ENCODE measurements at regions of chr9 and their contacts with region 1.

Region 1: DNA sequence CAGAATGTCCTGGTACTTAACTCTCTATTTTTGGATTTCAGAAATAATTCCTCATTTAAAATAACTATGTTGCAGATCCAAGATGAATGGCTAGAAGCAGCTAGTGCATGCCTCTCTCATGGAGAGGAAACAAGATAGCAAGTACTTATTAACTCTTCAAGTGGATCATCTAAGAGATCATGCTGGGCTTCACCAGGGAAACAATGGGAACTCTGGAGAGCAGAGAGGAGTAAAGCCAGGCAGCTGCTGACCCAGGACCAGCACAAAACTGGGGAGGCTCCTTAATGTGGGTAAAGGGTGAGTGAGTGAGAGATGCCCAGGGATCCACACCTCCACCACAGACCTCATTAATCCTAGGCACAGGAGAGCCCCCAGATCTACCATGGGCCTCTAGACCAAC is 897.8 kb upstream of the ACO1 start:
- DNase-seq: no peak
- ATAC-seq: no peak
- H3K4me3 ChIP-seq: no peak overlapping the region
- H3K4me3 Mint-ChIP-seq: no peak overlapping the region
- H3K27ac ChIP-seq: no peak overlapping the region
- H3K27ac Mint-ChIP-seq: no peak overlapping the region
- H3K4me1 ChIP-seq: no peaks in the 10 kb centered on the region
- H3K4me1 Mint-ChIP-seq: no peaks in the 10 kb centered on the region
- H3K27me3 ChIP-seq: no peaks in the 10 kb centered on the region
- H3K27me3 Mint-ChIP-seq: no peaks in the 10 kb centered on the region
- CTCF ChIP-seq: no peak

Region 2: GRCh38 chr9:30235564-30235963 is 1251.1 kb before region 1 on chr9:
- CTCF ChIA-PET with region 1: no interaction called
- POLR2A ChIA-PET with region 1: no interaction called
- intact Hi-C with region 1: no loop called
- DNase-seq: no peak
- ATAC-seq: no peak
- H3K4me3 ChIP-seq: no peak overlapping the region
- H3K4me3 Mint-ChIP-seq: no peak overlapping the region
- H3K27ac ChIP-seq: no peak overlapping the region
- H3K27ac Mint-ChIP-seq: no peak overlapping the region
- H3K4me1 ChIP-seq: no peaks in the 10 kb centered on the region
- H3K4me1 Mint-ChIP-seq: no peaks in the 10 kb centered on the region
- H3K27me3 ChIP-seq: no peaks in the 10 kb centered on the region
- H3K27me3 Mint-ChIP-seq: no peaks in the 10 kb centered on the region
- CTCF ChIP-seq: no peak

Region 3: GRCh38 chr9:31412081-31412480 is 74.5 kb before region 1 on chr9:
- CTCF ChIA-PET with region 1: no interaction called
- POLR2A ChIA-PET with region 1: no interaction called
- intact Hi-C with region 1: no loop called
- DNase-seq: no peak
- ATAC-seq: no peak
- H3K4me3 ChIP-seq: no peak overlapping the region
- H3K4me3 Mint-ChIP-seq: no peak overlapping the region
- H3K27ac ChIP-seq: no peak overlapping the region
- H3K27ac Mint-ChIP-seq: no peak overlapping the region
- H3K4me1 ChIP-seq: no peaks in the 10 kb centered on the region
- H3K4me1 Mint-ChIP-seq: peaks cover 5% of the 10 kb centered on the region
- H3K27me3 ChIP-seq: no peaks in the 10 kb centered on the region
- H3K27me3 Mint-ChIP-seq: no peaks in the 10 kb centered on the region
- CTCF ChIP-seq: no peak

Region 4: DNA sequence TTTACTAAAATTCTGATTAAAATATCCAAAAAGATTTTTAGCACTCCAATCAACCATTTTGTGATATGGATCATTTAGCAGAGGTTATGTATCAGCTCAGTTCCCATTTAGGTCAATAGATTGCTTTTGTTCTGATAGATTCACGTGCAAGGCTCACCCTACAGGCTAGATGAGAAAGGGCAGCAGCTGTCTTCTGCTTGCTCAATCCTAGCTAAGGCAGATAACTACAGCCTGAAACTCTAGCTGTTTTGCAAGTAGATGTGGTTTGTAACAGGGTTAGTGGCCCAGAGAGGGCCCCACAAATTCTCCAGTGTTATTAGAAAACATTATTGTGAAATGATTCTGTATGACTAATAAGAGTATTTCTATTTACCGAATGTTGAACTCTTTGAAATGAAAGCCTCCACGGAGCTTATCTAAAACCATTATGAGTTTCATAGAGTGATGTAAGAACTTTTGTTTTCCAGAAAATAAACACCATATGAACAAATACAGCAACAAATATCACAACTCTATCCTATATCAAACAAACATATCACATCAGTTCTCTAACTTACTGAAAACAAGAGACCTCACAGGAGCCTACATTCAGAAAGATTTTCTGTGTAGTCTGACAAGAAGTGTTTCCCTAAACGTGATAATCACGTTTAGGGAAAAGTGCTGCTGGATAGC is 55.9 kb after region 1 on chr9:
- CTCF ChIA-PET with region 1: no interaction called
- POLR2A ChIA-PET with region 1: no interaction called
- intact Hi-C with region 1: loop called in 1 of 2 experiments (anchors 5 kb)
- DNase-seq: peak in 9 of 14 experiments; percentile 1 to 62 (median 9)
- ATAC-seq: peak; percentile 80
- H3K4me3 ChIP-seq: no peak overlapping the region
- H3K4me3 Mint-ChIP-seq: no peak overlapping the region
- H3K27ac ChIP-seq: no peak overlapping the region
- H3K27ac Mint-ChIP-seq: no peak overlapping the region
- H3K4me1 ChIP-seq: no peaks in the 10 kb centered on the region
- H3K4me1 Mint-ChIP-seq: peaks cover 20% of the 10 kb centered on the region
- H3K27me3 ChIP-seq: no peaks in the 10 kb centered on the region
- H3K27me3 Mint-ChIP-seq: no peaks in the 10 kb centered on the region
- CTCF ChIP-seq: peak; percentile 28

Region 5: DNA sequence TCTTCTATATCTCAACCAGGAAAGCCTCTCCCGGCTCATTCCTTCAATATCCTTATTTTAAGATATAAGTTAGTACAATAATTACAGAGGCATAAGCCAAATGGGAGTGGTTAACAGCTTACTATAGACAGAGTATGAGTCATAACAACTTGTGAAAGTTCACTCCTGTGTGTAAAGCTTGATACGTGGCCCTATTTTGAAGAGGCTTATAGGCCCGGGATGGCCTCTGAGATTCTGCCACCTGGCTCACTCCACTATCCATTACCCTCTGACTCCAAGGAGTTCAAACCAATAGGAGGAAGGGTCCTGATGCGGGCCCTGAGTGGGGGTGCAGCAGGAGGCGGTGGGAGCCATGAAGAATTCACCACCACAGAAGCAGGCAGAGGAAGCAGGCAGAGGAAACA is 1643.9 kb after region 1 on chr9:
- CTCF ChIA-PET with region 1: no interaction called
- POLR2A ChIA-PET with region 1: no interaction called
- intact Hi-C with region 1: no loop called
- DNase-seq: peak in 2 of 14 experiments; percentile 31 to 47
- ATAC-seq: peak; percentile 46
- H3K4me3 ChIP-seq: no peak overlapping the region
- H3K4me3 Mint-ChIP-seq: no peak overlapping the region
- H3K27ac ChIP-seq: no peak overlapping the region
- H3K27ac Mint-ChIP-seq: peak overlapping the region; percentile 42
- H3K4me1 ChIP-seq: peaks cover 27% of the 10 kb centered on the region
- H3K4me1 Mint-ChIP-seq: peaks cover 32% of the 10 kb centered on the region
- H3K27me3 ChIP-seq: no peaks in the 10 kb centered on the region
- H3K27me3 Mint-ChIP-seq: no peaks in the 10 kb centered on the region
- CTCF ChIP-seq: no peak